ENCODE measurements at regions of chr3 and their contacts with region 1.

Region 1: GRCh38 chr3:105836533-105836932 is 32.3 kb downstream of the CBLB start:
- DNase-seq: peak in 4 of 14 experiments; percentile 40 to 66 (median 42)
- ATAC-seq: peak; percentile 65
- H3K4me3 ChIP-seq: peak overlapping the region; percentile 21
- H3K4me3 Mint-ChIP-seq: peak overlapping the region; percentile 40
- H3K27ac ChIP-seq: no peak overlapping the region
- H3K27ac Mint-ChIP-seq: peak overlapping the region; percentile 78
- H3K4me1 ChIP-seq: peaks cover 2% of the 10 kb centered on the region
- H3K4me1 Mint-ChIP-seq: peaks cover 86% of the 10 kb centered on the region
- H3K27me3 ChIP-seq: no peaks in the 10 kb centered on the region
- H3K27me3 Mint-ChIP-seq: no peaks in the 10 kb centered on the region
- CTCF ChIP-seq: no peak

Region 2: DNA sequence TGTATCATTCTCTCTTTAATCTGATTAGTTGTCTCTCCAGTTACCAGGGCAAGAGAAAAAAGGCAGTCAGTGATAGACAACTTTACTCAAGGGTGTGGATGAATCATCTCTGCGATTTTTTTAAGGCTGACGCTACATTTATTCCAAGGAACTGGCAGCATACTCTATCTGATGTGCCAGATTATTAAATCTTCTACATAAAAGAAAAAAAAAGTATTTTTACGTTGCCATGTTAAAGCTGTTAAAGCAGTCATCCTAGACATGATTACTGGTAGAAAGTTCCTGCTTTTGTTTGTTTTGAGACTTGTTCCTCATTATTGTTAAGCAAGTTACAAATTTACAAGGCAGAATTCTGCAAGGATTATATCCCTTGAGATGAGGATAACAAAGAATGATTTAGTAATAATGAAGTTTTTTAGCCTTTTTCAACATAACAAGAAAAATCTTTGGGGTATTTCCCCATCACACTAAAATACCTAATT is 89.4 kb before region 1 on chr3:
- CTCF ChIA-PET with region 1: no interaction called
- POLR2A ChIA-PET with region 1: no interaction called
- intact Hi-C with region 1: loop called (anchors 2 to 5 kb)
- DNase-seq: peak in 3 of 14 experiments; percentile 50 to 73 (median 60)
- ATAC-seq: peak; percentile 77
- H3K4me3 ChIP-seq: no peak overlapping the region
- H3K4me3 Mint-ChIP-seq: peak overlapping the region; percentile 49
- H3K27ac ChIP-seq: peak overlapping the region in 1 of 2 donors; percentile 35
- H3K27ac Mint-ChIP-seq: peak overlapping the region; percentile 94
- H3K4me1 ChIP-seq: peaks cover 26% of the 10 kb centered on the region
- H3K4me1 Mint-ChIP-seq: peaks cover 78% of the 10 kb centered on the region
- H3K27me3 ChIP-seq: no peaks in the 10 kb centered on the region
- H3K27me3 Mint-ChIP-seq: no peaks in the 10 kb centered on the region
- CTCF ChIP-seq: no peak

Region 3: GRCh38 chr3:105816833-105817232 is 19.7 kb before region 1 on chr3:
- CTCF ChIA-PET with region 1: interaction called, 3 read pairs
- POLR2A ChIA-PET with region 1: no interaction called
- intact Hi-C with region 1: loop called in 1 of 2 experiments (anchors 2 kb)
- DNase-seq: no peak
- ATAC-seq: no peak
- H3K4me3 ChIP-seq: no peak overlapping the region
- H3K4me3 Mint-ChIP-seq: no peak overlapping the region
- H3K27ac ChIP-seq: no peak overlapping the region
- H3K27ac Mint-ChIP-seq: no peak overlapping the region
- H3K4me1 ChIP-seq: peaks cover 3% of the 10 kb centered on the region
- H3K4me1 Mint-ChIP-seq: peaks cover 64% of the 10 kb centered on the region
- H3K27me3 ChIP-seq: no peaks in the 10 kb centered on the region
- H3K27me3 Mint-ChIP-seq: no peaks in the 10 kb centered on the region
- CTCF ChIP-seq: no peak

Region 4: DNA sequence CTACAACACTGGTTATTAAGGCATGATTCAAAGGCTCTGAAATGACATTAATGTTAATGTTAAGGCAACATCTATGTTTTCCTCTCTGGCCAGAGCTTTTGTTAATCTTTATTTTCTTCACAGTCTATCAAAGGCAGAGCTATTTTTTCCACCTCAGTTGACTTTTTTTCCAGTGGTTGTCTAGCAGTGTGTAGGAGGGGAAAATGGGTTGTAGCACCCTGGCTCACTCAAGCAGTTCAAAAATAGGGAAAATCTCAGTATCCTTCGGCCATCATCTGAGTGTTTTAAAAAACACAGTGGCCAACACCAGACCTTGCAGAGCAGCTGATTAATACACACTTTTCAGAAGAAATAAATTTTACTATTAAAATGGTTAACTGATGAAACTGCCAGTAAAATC is 10.9 kb after region 1 on chr3:
- CTCF ChIA-PET with region 1: interaction called, 11 read pairs
- POLR2A ChIA-PET with region 1: interaction called, 5 read pairs
- intact Hi-C with region 1: no loop called
- DNase-seq: no peak
- ATAC-seq: no peak
- H3K4me3 ChIP-seq: no peak overlapping the region
- H3K4me3 Mint-ChIP-seq: peak overlapping the region; percentile 45
- H3K27ac ChIP-seq: no peak overlapping the region
- H3K27ac Mint-ChIP-seq: peak overlapping the region; percentile 28
- H3K4me1 ChIP-seq: peaks cover 2% of the 10 kb centered on the region
- H3K4me1 Mint-ChIP-seq: peaks cover 74% of the 10 kb centered on the region
- H3K27me3 ChIP-seq: no peaks in the 10 kb centered on the region
- H3K27me3 Mint-ChIP-seq: no peaks in the 10 kb centered on the region
- CTCF ChIP-seq: no peak

Region 5: DNA sequence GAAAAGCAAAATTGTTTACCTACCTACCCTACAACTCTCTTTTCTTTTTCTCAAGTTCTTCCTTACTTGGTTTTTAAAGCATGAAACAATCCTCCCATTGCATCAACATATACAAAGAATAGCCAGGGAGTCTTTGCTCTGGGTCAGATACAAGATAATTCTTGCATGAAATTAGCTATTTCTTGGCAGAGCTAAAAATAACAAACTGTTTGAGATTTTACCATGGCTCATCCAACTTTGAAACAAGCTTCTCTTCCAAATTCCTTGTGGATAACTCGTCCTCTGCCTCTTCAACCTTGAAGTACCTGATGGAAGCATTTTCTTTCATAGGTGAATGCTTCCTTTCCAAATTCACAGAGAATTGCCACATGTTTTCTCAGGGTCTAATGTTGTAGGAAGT is 41.5 kb after region 1 on chr3:
- CTCF ChIA-PET with region 1: no interaction called
- POLR2A ChIA-PET with region 1: no interaction called
- intact Hi-C with region 1: no loop called
- DNase-seq: no peak
- ATAC-seq: no peak
- H3K4me3 ChIP-seq: no peak overlapping the region
- H3K4me3 Mint-ChIP-seq: no peak overlapping the region
- H3K27ac ChIP-seq: no peak overlapping the region
- H3K27ac Mint-ChIP-seq: peak overlapping the region; percentile 71
- H3K4me1 ChIP-seq: no peaks in the 10 kb centered on the region
- H3K4me1 Mint-ChIP-seq: peaks cover 41% of the 10 kb centered on the region
- H3K27me3 ChIP-seq: no peaks in the 10 kb centered on the region
- H3K27me3 Mint-ChIP-seq: no peaks in the 10 kb centered on the region
- CTCF ChIP-seq: no peak

Region 6: DNA sequence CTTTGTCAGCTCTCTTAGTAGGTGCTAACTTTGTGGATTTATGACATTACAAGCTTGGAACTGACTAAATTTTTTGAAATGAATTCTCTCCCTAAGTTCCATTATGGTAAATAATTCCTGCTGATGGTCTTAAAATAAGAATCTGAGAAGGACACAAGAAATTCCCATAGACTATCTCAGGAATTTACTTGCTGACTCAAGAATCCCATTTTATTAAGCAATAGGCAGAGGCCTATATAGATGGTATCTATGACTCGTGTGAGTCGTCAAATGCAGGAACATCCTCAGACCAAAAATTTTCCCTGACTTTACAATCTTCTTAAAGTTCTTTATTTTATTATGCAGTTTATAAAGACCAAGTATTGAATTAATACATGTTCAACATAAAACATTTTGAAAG is 63.0 kb after region 1 on chr3:
- CTCF ChIA-PET with region 1: no interaction called
- POLR2A ChIA-PET with region 1: no interaction called
- intact Hi-C with region 1: no loop called
- DNase-seq: no peak
- ATAC-seq: no peak
- H3K4me3 ChIP-seq: no peak overlapping the region
- H3K4me3 Mint-ChIP-seq: no peak overlapping the region
- H3K27ac ChIP-seq: no peak overlapping the region
- H3K27ac Mint-ChIP-seq: no peak overlapping the region
- H3K4me1 ChIP-seq: no peaks in the 10 kb centered on the region
- H3K4me1 Mint-ChIP-seq: no peaks in the 10 kb centered on the region
- H3K27me3 ChIP-seq: no peaks in the 10 kb centered on the region
- H3K27me3 Mint-ChIP-seq: no peaks in the 10 kb centered on the region
- CTCF ChIP-seq: no peak